H1 (cell line): ENCODE measurements at regions of chr5 and their contacts with region 1.

Region 1: DNA sequence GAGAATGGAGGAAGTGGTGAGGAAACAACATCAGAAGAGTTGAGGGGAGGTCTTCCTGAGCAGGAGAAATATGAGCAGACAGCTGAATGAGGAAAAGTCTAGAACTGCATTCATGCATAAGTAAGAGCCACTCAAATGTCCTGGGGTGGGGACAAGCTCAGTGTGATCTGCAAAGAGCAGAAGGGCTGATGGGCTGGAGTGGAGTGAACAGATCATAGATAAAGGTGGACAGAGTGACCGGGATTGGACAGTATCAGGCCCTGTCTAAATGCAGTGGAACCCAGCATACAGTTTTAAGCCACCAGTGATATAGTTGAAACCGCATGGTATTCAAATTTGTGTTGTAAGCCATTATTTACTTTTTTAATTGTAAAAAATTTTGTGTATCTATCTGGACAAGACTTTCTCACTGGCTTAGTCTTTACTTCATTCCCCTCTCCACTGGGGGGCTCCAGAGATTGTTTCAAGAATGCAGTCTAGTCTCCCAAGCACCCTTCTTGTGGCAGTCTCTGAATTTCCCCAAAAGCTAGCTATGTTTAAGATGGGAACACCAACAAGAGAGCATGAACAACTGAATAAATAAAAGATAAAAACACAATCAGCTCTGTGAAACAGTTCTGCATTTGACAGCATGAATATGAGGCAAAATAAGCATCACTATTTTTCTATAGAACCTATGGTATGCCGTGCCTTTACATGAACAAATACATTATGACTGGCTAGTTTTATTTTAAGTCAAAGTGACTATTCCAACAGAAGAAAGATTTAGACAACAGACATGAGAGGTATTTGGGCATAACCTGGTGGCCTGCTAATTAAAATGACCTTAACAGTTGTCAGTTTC is 10.7 kb upstream of the STK32A start:
- DNase-seq: no peak
- H3K4me3 ChIP-seq: no peak overlapping the region
- H3K27ac ChIP-seq: no peak overlapping the region
- H3K4me1 ChIP-seq: peaks cover 0 to 2% (median 0%) of the 10 kb centered on the region in 4 experiments; a peak in 4 of 7 replicates
- H3K27me3 ChIP-seq: no peaks in the 10 kb centered on the region
- CTCF ChIP-seq: peak in 2 of 3 experiments; percentile 53 to 73; a peak in 3 of 4 replicates
- EP300 ChIP-seq: no peak
- POLR2A ChIP-seq: no peak
- RAD21 ChIP-seq: peak; percentile 90 to 93

Region 2: GRCh38 chr5:147148715-147149114 is 75.5 kb before region 1 on chr5:
- CTCF ChIA-PET with region 1: no interaction called
- POLR2A ChIA-PET with region 1: no interaction called
- DNase-seq: no peak
- H3K4me3 ChIP-seq: no peak overlapping the region
- H3K27ac ChIP-seq: no peak overlapping the region
- H3K4me1 ChIP-seq: no peaks in the 10 kb centered on the region
- H3K27me3 ChIP-seq: peaks cover 0 to 1% (median 0%) of the 10 kb centered on the region in 4 experiments; a peak in 1 of 7 replicates
- CTCF ChIP-seq: no peak
- EP300 ChIP-seq: no peak
- POLR2A ChIP-seq: no peak
- RAD21 ChIP-seq: no peak

Region 3: GRCh38 chr5:147234825-147235635 is 10.9 kb after region 1 on chr5 and contains the start of gene STK32A:
- CTCF ChIA-PET with region 1: interaction called, 11 read pairs
- POLR2A ChIA-PET with region 1: no interaction called
- DNase-seq: peak; percentile 59 to 88
- H3K4me3 ChIP-seq: peak within 1 kb of the TSS; percentile 60 to 76 (median 68)
- H3K27ac ChIP-seq: no peak within 1 kb of the TSS
- H3K4me1 ChIP-seq: peaks cover 0 to 3% (median 0%) of the 10 kb centered on the region in 4 experiments; a peak in 2 of 7 replicates
- H3K27me3 ChIP-seq: peaks cover 2 to 26% (median 5%) of the 10 kb centered on the region in 4 experiments
- CTCF ChIP-seq: peak in 2 of 3 experiments; percentile 46 to 60; a peak in 3 of 4 replicates
- EP300 ChIP-seq: no peak
- POLR2A ChIP-seq: peak; percentile 44 to 69
- RAD21 ChIP-seq: peak; percentile 68 to 81
- total RNA-seq, gene STK32A: 1.5 and 2.5 TPM in 2 replicates

Region 4: GRCh38 chr5:147391781-147392180 is 167.6 kb after region 1 on chr5:
- CTCF ChIA-PET with region 1: interaction called, 20 read pairs
- POLR2A ChIA-PET with region 1: no interaction called
- DNase-seq: no peak
- H3K4me3 ChIP-seq: no peak overlapping the region
- H3K27ac ChIP-seq: no peak overlapping the region
- H3K4me1 ChIP-seq: peaks cover 4 to 10% (median 8%) of the 10 kb centered on the region in 4 experiments; a peak in 5 of 7 replicates
- H3K27me3 ChIP-seq: no peaks in the 10 kb centered on the region; a peak in 1 of 7 replicates
- CTCF ChIP-seq: peak; percentile 2 to 67 (median 16); a peak in 3 of 4 replicates
- EP300 ChIP-seq: no peak
- POLR2A ChIP-seq: peak in 1 of 2 experiments; percentile 45; a peak in 1 of 3 replicates
- RAD21 ChIP-seq: peak; percentile 50 to 65